ENCODE measurements at regions of chr12 and their contacts with region 1.

Region 1: GRCh38 chr12:40921563-40922163 is 229.4 kb downstream of the CNTN1 start:
- DNase-seq: no peak
- H3K4me3 ChIP-seq: no peak overlapping the region
- H3K27ac ChIP-seq: no peak overlapping the region
- H3K4me1 ChIP-seq: no peaks in the 10 kb centered on the region
- H3K27me3 ChIP-seq: no peaks in the 10 kb centered on the region
- CTCF ChIP-seq: peak; percentile 59 to 61

Region 2: DNA sequence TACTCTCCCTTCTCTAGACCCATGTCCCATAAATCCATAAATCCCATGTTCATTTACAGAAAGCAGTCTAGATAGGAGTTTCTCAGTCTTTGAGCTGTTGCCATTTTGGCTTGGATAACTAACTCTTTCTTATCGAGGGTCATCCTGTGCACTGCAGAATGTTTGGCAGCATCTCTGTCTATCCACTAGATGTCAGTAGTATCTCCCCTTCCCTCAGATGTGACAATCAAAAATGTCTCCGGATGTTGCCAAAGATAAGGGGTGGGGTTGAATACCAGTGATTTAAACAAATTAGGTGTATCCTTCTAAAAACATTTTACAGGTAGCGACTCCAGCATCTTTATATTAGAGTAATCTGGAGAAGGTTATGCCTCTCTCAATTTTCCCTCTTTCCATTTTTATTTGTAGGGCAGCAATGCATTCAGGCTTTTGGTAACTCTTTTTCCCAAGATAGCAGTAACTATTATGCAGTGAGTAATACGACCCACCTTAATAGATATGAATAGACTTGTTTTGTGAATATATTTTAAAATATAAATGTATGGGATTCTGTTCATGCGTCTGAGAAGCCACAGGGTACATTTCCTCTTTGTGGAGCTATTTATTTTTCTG is 596.2 kb before region 1 on chr12:
- CTCF ChIA-PET with region 1: interaction called, 10 read pairs
- dilution Hi-C with region 1: no loop called
- in situ Hi-C with region 1: loop called in 1 of 2 experiments (anchors 25 kb)
- intact Hi-C with region 1: loop called (anchors 2 kb)
- DNase-seq: peak; percentile 28
- H3K4me3 ChIP-seq: no peak overlapping the region
- H3K27ac ChIP-seq: no peak overlapping the region
- H3K4me1 ChIP-seq: peaks cover 6% of the 10 kb centered on the region
- H3K27me3 ChIP-seq: no peaks in the 10 kb centered on the region
- CTCF ChIP-seq: peak; percentile 86

Region 3: DNA sequence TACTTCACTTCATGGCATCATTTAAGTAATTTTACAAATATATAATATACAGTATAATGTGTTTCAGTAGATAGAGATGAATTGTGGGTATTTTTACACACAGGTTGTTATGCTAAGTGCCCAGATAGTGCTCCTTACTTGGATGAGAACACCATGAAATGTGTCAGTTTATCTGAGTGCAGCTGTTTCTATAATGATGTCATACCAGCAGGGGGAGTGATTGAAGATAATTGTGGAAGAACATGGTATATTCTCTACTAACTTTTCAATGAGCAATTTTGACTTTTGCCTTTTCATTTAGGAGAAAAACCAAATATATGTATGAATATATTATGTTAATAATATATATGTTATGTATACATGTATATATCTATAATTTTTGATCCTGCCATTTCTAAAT is 475.3 kb before region 1 on chr12:
- CTCF ChIA-PET with region 1: no interaction called
- dilution Hi-C with region 1: no loop called
- in situ Hi-C with region 1: no loop called
- intact Hi-C with region 1: loop called (anchors 10 kb)
- DNase-seq: peak; percentile 17
- H3K4me3 ChIP-seq: no peak overlapping the region
- H3K27ac ChIP-seq: no peak overlapping the region
- H3K4me1 ChIP-seq: no peaks in the 10 kb centered on the region
- H3K27me3 ChIP-seq: no peaks in the 10 kb centered on the region
- CTCF ChIP-seq: peak; percentile 40 to 61

Region 4: GRCh38 chr12:40622246-40622838 is 299.3 kb before region 1 on chr12:
- CTCF ChIA-PET with region 1: no interaction called
- dilution Hi-C with region 1: no loop called
- in situ Hi-C with region 1: loop called (anchors 5 to 10 kb)
- intact Hi-C with region 1: loop called (anchors 1 kb)
- DNase-seq: peak; percentile 46
- H3K4me3 ChIP-seq: no peak overlapping the region
- H3K27ac ChIP-seq: no peak overlapping the region
- H3K4me1 ChIP-seq: no peaks in the 10 kb centered on the region
- H3K27me3 ChIP-seq: no peaks in the 10 kb centered on the region
- CTCF ChIP-seq: peak; percentile 82 to 83

Region 5: DNA sequence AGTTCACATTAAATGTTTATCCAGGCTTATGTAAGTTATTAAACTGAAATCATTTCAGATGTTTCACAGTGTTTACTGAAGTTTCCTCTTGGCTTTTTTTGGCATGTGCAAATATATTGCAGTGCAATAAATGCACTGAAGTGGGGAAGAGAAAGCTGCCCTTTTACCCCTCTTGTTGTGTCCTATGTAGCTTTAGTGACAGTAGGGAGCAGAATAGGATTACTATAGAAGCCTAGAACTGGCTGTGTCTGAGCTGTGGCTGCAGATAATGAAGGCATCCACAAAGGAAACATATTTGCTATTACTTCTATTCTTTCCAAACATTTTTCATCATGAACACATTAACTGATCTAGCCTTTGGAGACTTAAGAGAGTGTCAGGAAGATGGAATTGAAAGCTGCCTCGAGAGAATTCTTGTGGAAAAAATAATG is 253.5 kb before region 1 on chr12:
- CTCF ChIA-PET with region 1: no interaction called
- dilution Hi-C with region 1: no loop called
- in situ Hi-C with region 1: no loop called
- intact Hi-C with region 1: loop called (anchors 1 kb)
- DNase-seq: no peak
- H3K4me3 ChIP-seq: no peak overlapping the region
- H3K27ac ChIP-seq: no peak overlapping the region
- H3K4me1 ChIP-seq: peaks cover 7% of the 10 kb centered on the region
- H3K27me3 ChIP-seq: no peaks in the 10 kb centered on the region
- CTCF ChIP-seq: no peak

Region 6: GRCh38 chr12:40745386-40745785 is 176.3 kb before region 1 on chr12:
- CTCF ChIA-PET with region 1: no interaction called
- dilution Hi-C with region 1: no loop called
- in situ Hi-C with region 1: no loop called
- intact Hi-C with region 1: loop called (anchors 2 kb)
- DNase-seq: no peak
- H3K4me3 ChIP-seq: no peak overlapping the region
- H3K27ac ChIP-seq: no peak overlapping the region
- H3K4me1 ChIP-seq: no peaks in the 10 kb centered on the region
- H3K27me3 ChIP-seq: no peaks in the 10 kb centered on the region
- CTCF ChIP-seq: peak in 1 of 2 donors; percentile 40